Endothelial cell of umbilical vein (primary cell): ENCODE measurements at regions of chr1 and their contacts with region 1.

Region 1: GRCh38 chr1:27603681-27604578 is at the start of gene AHDC1:
- DNase-seq: peak; percentile 88
- H3K4me3 ChIP-seq: peak within 1 kb of the TSS; percentile 60 to 97 (median 71)
- H3K27ac ChIP-seq: no peak within 1 kb of the TSS
- H3K4me1 ChIP-seq: peaks cover 15% of the 10 kb centered on the region
- H3K27me3 ChIP-seq: no peaks in the 10 kb centered on the region
- CTCF ChIP-seq: no peak
- POLR2A ChIP-seq: peak; percentile 48
- total RNA-seq, gene AHDC1: 32.1 and 33.0 TPM in 2 replicates

Region 2: GRCh38 chr1:27300341-27301051 is 303.4 kb before region 1 on chr1:
- CTCF ChIA-PET with region 1: interaction called, 43 read pairs
- POLR2A ChIA-PET with region 1: no interaction called
- dilution Hi-C with region 1: no loop called
- intact Hi-C with region 1: loop called (anchors 1 kb)
- DNase-seq: peak; percentile 89
- H3K4me3 ChIP-seq: no peak overlapping the region
- H3K27ac ChIP-seq: no peak overlapping the region
- H3K4me1 ChIP-seq: no peaks in the 10 kb centered on the region
- H3K27me3 ChIP-seq: no peaks in the 10 kb centered on the region
- CTCF ChIP-seq: peak; percentile 95 to 98
- POLR2A ChIP-seq: no peak

Region 3: DNA sequence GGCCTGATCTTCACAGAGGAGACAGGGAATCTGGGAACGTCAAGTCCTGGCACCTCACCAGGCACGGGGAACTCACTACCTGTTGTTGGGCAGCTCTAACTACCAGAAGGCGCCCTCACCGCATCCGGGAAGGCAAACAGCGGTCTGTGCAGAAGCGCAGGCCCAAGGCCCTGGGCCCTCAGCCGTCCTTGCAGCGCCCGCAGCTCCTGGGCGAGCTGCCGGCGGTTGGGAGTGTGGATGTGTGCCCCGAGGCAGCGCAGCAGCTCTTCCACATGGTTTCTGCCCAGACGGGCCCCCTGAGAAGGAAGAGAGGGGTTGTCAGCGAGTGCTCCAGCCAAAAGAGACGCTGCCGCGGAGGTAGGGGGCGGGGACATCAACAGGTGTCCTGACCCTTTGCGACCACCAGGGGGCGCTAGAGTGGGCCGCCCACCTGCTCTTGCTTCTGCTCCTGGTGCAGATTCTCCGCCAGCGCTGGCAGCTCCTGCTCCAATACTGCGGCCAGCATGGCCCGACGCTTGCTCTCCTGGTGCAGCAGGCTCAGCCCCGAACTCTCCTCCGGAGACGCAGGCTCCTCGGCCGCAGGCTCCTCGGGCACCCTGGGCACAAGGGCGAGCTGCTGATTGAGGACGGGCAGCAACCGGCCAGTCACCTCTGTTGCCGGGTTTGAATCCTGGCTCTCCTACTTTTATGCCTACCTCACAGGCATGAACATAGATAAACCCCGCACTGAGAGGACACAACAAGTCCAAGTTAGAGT is 246.5 kb before region 1 on chr1:
- CTCF ChIA-PET with region 1: interaction called, 17 read pairs
- POLR2A ChIA-PET with region 1: no interaction called
- dilution Hi-C with region 1: no loop called
- intact Hi-C with region 1: loop called (anchors 1 kb)
- DNase-seq: peak; percentile 57
- H3K4me3 ChIP-seq: no peak overlapping the region
- H3K27ac ChIP-seq: no peak overlapping the region
- H3K4me1 ChIP-seq: no peaks in the 10 kb centered on the region
- H3K27me3 ChIP-seq: no peaks in the 10 kb centered on the region
- CTCF ChIP-seq: peak; percentile 90 to 99
- POLR2A ChIP-seq: no peak

Region 4: GRCh38 chr1:27402349-27402754 is 201.6 kb before region 1 on chr1:
- CTCF ChIA-PET with region 1: interaction called, 61 read pairs
- POLR2A ChIA-PET with region 1: no interaction called
- dilution Hi-C with region 1: loop called (anchors 25 kb)
- intact Hi-C with region 1: loop called (anchors 1 kb)
- DNase-seq: peak; percentile 74
- H3K4me3 ChIP-seq: no peak overlapping the region
- H3K27ac ChIP-seq: no peak overlapping the region
- H3K4me1 ChIP-seq: peaks cover 4% of the 10 kb centered on the region
- H3K27me3 ChIP-seq: no peaks in the 10 kb centered on the region
- CTCF ChIP-seq: peak; percentile 57 to 81
- POLR2A ChIP-seq: no peak

Region 5: GRCh38 chr1:27455139-27455811 is 148.7 kb before region 1 on chr1:
- CTCF ChIA-PET with region 1: no interaction called
- POLR2A ChIA-PET with region 1: no interaction called
- dilution Hi-C with region 1: no loop called
- intact Hi-C with region 1: no loop called
- DNase-seq: no peak
- H3K4me3 ChIP-seq: no peak overlapping the region
- H3K27ac ChIP-seq: no peak overlapping the region
- H3K4me1 ChIP-seq: peaks cover 10% of the 10 kb centered on the region
- H3K27me3 ChIP-seq: no peaks in the 10 kb centered on the region
- CTCF ChIP-seq: no peak
- POLR2A ChIP-seq: no peak

Region 6: DNA sequence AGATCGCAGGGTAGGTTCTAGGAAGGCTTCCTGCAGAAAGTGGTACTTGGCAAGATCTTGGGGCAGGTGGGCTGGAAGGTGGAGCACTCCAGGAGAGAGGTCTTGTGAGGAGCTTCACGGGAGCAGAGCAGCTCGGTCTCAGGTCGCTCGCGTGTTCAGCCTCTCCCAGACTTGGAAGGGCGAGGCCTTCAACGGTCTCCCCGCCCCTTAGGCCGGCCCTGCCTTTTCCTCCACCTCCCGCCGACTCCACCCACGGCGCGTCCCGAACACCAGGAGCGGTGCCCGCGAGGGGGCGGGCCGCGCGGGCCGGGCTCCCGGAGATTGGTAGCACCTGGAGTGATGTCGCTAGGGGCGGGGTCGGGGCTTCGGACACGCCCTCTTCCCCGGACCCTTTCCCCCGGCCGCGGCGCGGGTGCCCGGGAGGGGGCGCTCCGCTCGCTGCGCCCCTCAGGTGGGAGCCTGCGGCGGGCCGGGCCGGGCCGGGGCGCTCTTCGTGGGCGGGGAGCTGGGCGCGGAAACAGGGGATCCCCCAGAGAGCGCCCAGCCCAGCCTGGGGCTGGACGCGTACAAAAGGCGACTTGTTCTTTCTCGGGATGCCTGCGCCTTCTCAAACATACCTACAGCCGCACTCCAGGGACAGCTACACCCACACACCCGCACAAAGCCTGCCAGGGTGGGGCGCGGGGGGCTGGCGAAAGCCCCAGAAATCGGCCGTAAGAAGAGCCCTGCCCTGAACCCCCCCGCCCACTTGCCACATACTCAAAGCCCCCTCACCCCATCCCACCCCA is 35.4 kb before region 1 on chr1:
- CTCF ChIA-PET with region 1: interaction called, 37 read pairs
- POLR2A ChIA-PET with region 1: interaction called, 3 read pairs
- dilution Hi-C with region 1: no loop called
- intact Hi-C with region 1: loop called (anchors 1 kb)
- DNase-seq: peak; percentile 91
- H3K4me3 ChIP-seq: no peak overlapping the region
- H3K27ac ChIP-seq: no peak overlapping the region
- H3K4me1 ChIP-seq: peaks cover 10% of the 10 kb centered on the region
- H3K27me3 ChIP-seq: no peaks in the 10 kb centered on the region
- CTCF ChIP-seq: peak; percentile 70 to 79
- POLR2A ChIP-seq: no peak

Region 7: GRCh38 chr1:27662707-27663393 is 58.9 kb after region 1 on chr1:
- CTCF ChIA-PET with region 1: interaction called, 306 read pairs
- POLR2A ChIA-PET with region 1: interaction called, 3 read pairs
- dilution Hi-C with region 1: no loop called
- intact Hi-C with region 1: loop called (anchors 1 kb)
- DNase-seq: peak; percentile 83
- H3K4me3 ChIP-seq: no peak overlapping the region
- H3K27ac ChIP-seq: no peak overlapping the region
- H3K4me1 ChIP-seq: peaks cover 14% of the 10 kb centered on the region
- H3K27me3 ChIP-seq: no peaks in the 10 kb centered on the region
- CTCF ChIP-seq: peak; percentile 80 to 85
- POLR2A ChIP-seq: no peak

Region 8: GRCh38 chr1:27789540-27790041 is 185.7 kb after region 1 on chr1:
- CTCF ChIA-PET with region 1: no interaction called
- POLR2A ChIA-PET with region 1: no interaction called
- dilution Hi-C with region 1: no loop called
- intact Hi-C with region 1: no loop called
- DNase-seq: peak; percentile 92
- H3K4me3 ChIP-seq: peak overlapping the region in 1 of 3 experiments; percentile 7
- H3K27ac ChIP-seq: peak overlapping the region; percentile 79
- H3K4me1 ChIP-seq: peaks cover 37% of the 10 kb centered on the region
- H3K27me3 ChIP-seq: no peaks in the 10 kb centered on the region
- CTCF ChIP-seq: no peak
- POLR2A ChIP-seq: peak; percentile 19